ENCODE measurements at regions of chr3 and their contacts with region 1.

Region 1: GRCh38 chr3:101803173-101803782 is 24.3 kb downstream of the NXPE3 start:
- DNase-seq: peak; percentile 87
- H3K4me3 Mint-ChIP-seq: no peak overlapping the region
- H3K27ac Mint-ChIP-seq: no peak overlapping the region
- H3K4me1 Mint-ChIP-seq: no peaks in the 10 kb centered on the region
- H3K27me3 Mint-ChIP-seq: no peaks in the 10 kb centered on the region
- CTCF ChIP-seq: peak; percentile 69

Region 2: GRCh38 chr3:101695779-101696372 is 107.4 kb before region 1 on chr3:
- CTCF ChIA-PET with region 1: interaction called, 6 read pairs
- POLR2A ChIA-PET with region 1: no interaction called
- intact Hi-C with region 1: loop called (anchors 2 kb)
- DNase-seq: peak; percentile 75
- H3K4me3 Mint-ChIP-seq: no peak overlapping the region
- H3K27ac Mint-ChIP-seq: no peak overlapping the region
- H3K4me1 Mint-ChIP-seq: peaks cover 7% of the 10 kb centered on the region
- H3K27me3 Mint-ChIP-seq: no peaks in the 10 kb centered on the region
- CTCF ChIP-seq: peak; percentile 83

Region 3: GRCh38 chr3:101791778-101792177 is 11.5 kb before region 1 on chr3:
- CTCF ChIA-PET with region 1: interaction called, 24 read pairs
- POLR2A ChIA-PET with region 1: interaction called, 3 read pairs
- intact Hi-C with region 1: no loop called
- DNase-seq: no peak
- H3K4me3 Mint-ChIP-seq: no peak overlapping the region
- H3K27ac Mint-ChIP-seq: no peak overlapping the region
- H3K4me1 Mint-ChIP-seq: no peaks in the 10 kb centered on the region
- H3K27me3 Mint-ChIP-seq: no peaks in the 10 kb centered on the region
- CTCF ChIP-seq: no peak

Region 4: GRCh38 chr3:101816215-101817149 is 13.2 kb after region 1 on chr3:
- CTCF ChIA-PET with region 1: interaction called, 22 read pairs
- POLR2A ChIA-PET with region 1: interaction called, 3 read pairs
- intact Hi-C with region 1: no loop called
- DNase-seq: peak; percentile 51
- H3K4me3 Mint-ChIP-seq: no peak overlapping the region
- H3K27ac Mint-ChIP-seq: no peak overlapping the region
- H3K4me1 Mint-ChIP-seq: no peaks in the 10 kb centered on the region
- H3K27me3 Mint-ChIP-seq: no peaks in the 10 kb centered on the region
- CTCF ChIP-seq: no peak

Region 5: DNA sequence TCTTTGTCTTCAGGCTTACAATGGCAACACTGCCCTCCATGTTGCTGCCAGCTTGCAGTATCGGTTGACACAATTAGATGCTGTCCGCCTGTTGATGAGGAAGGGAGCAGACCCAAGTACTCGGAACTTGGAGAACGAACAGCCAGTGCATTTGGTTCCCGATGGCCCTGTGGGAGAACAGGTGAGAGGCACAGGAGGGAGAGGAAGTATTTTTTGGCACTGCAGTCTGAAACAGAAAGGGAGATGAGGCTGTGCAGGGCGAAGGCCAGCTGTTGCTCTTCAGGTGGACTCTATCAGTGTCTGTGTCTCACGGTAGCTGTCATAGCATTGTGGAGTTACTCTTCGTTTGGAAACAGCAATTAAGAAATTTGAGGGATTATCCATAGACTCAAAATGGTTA is 54.0 kb after region 1 on chr3:
- CTCF ChIA-PET with region 1: interaction called, 13 read pairs
- POLR2A ChIA-PET with region 1: no interaction called
- intact Hi-C with region 1: no loop called
- DNase-seq: no peak
- H3K4me3 Mint-ChIP-seq: no peak overlapping the region
- H3K27ac Mint-ChIP-seq: no peak overlapping the region
- H3K4me1 Mint-ChIP-seq: peaks cover 40% of the 10 kb centered on the region
- H3K27me3 Mint-ChIP-seq: no peaks in the 10 kb centered on the region
- CTCF ChIP-seq: no peak

Region 6: DNA sequence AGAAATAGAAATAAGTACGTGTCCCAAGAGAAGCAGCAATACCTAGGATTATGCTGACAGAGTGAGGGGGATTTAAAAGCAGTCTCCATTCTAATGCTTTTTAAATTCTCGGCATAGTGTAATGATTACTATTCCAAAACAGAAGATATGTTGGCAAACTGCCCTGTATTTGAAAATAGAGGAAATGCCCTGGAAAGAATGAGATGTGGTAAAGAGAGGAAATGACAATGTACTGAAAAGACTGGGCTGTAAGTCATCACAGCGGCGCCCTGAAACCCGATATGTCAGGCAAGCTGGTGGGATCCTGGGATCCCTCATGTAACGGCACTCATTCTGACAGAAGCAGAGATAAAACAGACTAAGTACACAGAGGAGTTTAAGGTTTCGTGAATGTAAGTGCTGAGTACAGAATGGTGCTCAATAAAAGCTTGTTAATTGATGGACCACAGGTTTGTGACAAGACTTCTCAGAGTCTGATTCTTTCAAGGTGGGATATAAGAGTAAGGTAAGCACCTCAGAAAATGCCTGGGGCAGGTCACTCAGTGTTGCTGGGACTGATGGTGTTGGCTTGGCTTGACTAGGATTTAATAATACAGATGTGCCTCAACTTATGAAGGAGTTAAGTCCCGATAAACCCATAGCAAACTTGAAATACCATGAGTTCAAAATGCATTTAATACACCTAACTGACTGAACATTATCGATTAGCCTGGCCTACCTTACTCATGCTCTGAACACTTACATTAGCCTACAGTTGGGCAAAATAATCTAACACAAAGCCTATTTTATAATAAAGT is 137.4 kb after region 1 on chr3:
- CTCF ChIA-PET with region 1: no interaction called
- POLR2A ChIA-PET with region 1: no interaction called
- intact Hi-C with region 1: no loop called
- DNase-seq: peak; percentile 79
- H3K4me3 Mint-ChIP-seq: no peak overlapping the region
- H3K27ac Mint-ChIP-seq: no peak overlapping the region
- H3K4me1 Mint-ChIP-seq: peaks cover 5% of the 10 kb centered on the region
- H3K27me3 Mint-ChIP-seq: no peaks in the 10 kb centered on the region
- CTCF ChIP-seq: no peak

Region 7: DNA sequence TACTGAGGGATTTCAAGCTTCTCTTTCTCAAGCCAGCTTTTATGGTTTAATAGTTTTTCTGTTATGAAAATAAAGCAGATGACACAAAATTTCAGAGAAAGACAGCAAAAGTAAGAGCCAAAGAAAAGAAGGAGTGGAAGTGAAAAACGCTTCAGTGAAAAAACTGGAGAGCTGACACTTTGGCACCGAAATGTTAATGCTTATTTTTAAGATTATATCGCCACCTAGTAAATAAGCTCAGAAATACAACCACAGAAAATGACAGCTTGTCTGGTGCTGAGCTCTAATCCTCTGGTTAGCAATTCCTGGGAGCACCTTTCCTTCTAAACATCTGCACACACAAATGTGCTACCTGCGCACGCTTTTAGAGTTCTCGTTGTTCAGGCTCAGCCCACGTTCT is 733.2 kb after region 1 on chr3:
- CTCF ChIA-PET with region 1: interaction called, 19 read pairs
- POLR2A ChIA-PET with region 1: no interaction called
- intact Hi-C with region 1: no loop called
- DNase-seq: peak; percentile 55
- H3K4me3 Mint-ChIP-seq: no peak overlapping the region
- H3K27ac Mint-ChIP-seq: no peak overlapping the region
- H3K4me1 Mint-ChIP-seq: peaks cover 16% of the 10 kb centered on the region
- H3K27me3 Mint-ChIP-seq: no peaks in the 10 kb centered on the region
- CTCF ChIP-seq: peak; percentile 48

Measured in MCF 10A (cell line).